Natural killer cell (primary cell): ENCODE measurements at regions of chr2 and their contacts with region 1.

Region 1: DNA sequence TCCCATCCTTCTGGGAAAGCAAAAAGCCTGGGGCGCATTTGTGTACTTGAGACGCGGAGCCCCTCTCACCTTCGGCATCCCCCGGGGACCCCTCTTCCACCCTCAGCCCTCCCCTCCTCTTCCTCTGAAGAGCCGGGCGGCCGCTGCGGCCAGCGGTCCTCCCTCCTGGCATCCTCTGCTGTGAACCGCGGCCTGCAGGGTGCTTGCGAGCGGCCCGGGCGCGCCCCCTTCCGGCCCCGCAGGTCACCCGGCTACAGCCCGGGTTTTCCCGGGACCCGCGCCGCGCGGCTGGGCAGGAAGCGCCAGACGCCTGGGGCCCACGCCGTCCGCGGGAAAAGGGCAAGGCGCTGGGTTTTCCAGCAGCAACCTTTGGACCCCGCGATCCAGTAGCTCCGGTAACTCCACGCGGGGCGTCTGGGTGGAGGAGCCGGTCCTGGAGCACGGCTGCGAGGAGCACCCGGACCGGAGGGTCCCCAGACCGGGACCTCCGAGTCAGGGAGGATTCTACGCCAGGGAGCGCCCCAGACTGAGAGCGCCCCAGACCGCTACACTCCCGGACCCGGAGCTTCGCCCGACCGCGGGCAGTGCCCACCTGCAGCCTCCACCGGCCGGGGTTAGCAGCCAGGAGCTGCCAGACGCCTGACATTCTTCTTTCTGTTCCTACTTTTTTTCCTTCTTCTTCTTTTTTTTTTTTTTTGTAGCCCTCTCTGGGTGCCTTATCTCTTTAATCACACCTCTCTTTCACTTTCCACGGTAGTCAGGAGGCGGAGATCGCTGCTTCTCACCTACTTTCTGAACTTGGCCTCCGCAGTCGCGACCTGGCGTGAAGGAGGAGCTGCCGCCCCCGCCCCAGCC is at the start of gene IL18R1:
- DNase-seq: peak; percentile 75 to 86
- ATAC-seq: peak; percentile 86 to 94 (median 92)
- H3K4me3 ChIP-seq: peak within 1 kb of the TSS; percentile 98
- H3K4me3 Mint-ChIP-seq: peak within 1 kb of the TSS; percentile 99
- H3K27ac ChIP-seq: peak within 1 kb of the TSS; percentile 94
- H3K27ac Mint-ChIP-seq: peak within 1 kb of the TSS; percentile 90 to 97
- H3K4me1 ChIP-seq: peaks cover 31% of the 10 kb centered on the region
- H3K4me1 Mint-ChIP-seq: peaks cover 40 to 48% of the 10 kb centered on the region in 2 donors
- H3K27me3 ChIP-seq: no peaks in the 10 kb centered on the region
- H3K27me3 Mint-ChIP-seq: no peaks in the 10 kb centered on the region
- CTCF ChIP-seq: peak; percentile 91
- total RNA-seq, gene IL18R1: 42.9 to 58.8 (median 46.7) TPM

Region 2: GRCh38 chr2:101688261-101688660 is 667.5 kb before region 1 on chr2:
- intact Hi-C with region 1: no loop called
- DNase-seq: no peak
- ATAC-seq: no peak
- H3K4me3 ChIP-seq: no peak overlapping the region
- H3K4me3 Mint-ChIP-seq: no peak overlapping the region
- H3K27ac ChIP-seq: no peak overlapping the region
- H3K27ac Mint-ChIP-seq: no peak overlapping the region
- H3K4me1 ChIP-seq: no peaks in the 10 kb centered on the region
- H3K4me1 Mint-ChIP-seq: no peaks in the 10 kb centered on the region
- H3K27me3 ChIP-seq: no peaks in the 10 kb centered on the region
- H3K27me3 Mint-ChIP-seq: no peaks in the 10 kb centered on the region
- CTCF ChIP-seq: no peak

Region 3: GRCh38 chr2:101823347-101823791 is 532.4 kb before region 1 on chr2:
- intact Hi-C with region 1: loop called (anchors 5 kb)
- DNase-seq: peak; percentile 44 to 86
- ATAC-seq: peak; percentile 84 to 94 (median 90)
- H3K4me3 ChIP-seq: no peak overlapping the region
- H3K4me3 Mint-ChIP-seq: no peak overlapping the region
- H3K27ac ChIP-seq: no peak overlapping the region
- H3K27ac Mint-ChIP-seq: peak overlapping the region; percentile 33 to 37
- H3K4me1 ChIP-seq: peaks cover 10% of the 10 kb centered on the region
- H3K4me1 Mint-ChIP-seq: peaks cover 48 to 51% of the 10 kb centered on the region in 2 donors
- H3K27me3 ChIP-seq: no peaks in the 10 kb centered on the region
- H3K27me3 Mint-ChIP-seq: no peaks in the 10 kb centered on the region
- CTCF ChIP-seq: peak; percentile 74

Region 4: DNA sequence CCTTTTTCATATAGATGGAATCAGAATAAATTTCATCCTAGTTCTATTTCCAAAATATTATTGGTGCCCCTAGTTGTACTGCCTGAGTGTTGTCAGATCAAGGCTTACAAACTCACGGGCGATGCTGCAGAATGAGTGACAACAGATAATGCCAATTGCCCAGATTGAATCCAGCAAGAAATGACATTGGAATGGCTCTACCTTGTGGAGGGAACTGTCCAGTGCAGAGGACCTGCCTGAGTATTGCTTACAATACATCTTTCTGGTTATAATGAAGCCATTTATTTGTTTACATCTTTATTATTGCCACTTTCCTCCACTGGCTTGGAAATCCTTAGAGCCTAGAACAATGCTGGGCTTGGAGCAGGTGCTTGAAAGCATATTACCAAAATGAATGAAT is 371.8 kb before region 1 on chr2:
- intact Hi-C with region 1: loop called (anchors 5 kb)
- DNase-seq: no peak
- ATAC-seq: no peak
- H3K4me3 ChIP-seq: no peak overlapping the region
- H3K4me3 Mint-ChIP-seq: no peak overlapping the region
- H3K27ac ChIP-seq: no peak overlapping the region
- H3K27ac Mint-ChIP-seq: no peak overlapping the region
- H3K4me1 ChIP-seq: peaks cover 70% of the 10 kb centered on the region
- H3K4me1 Mint-ChIP-seq: peaks cover 56 to 62% of the 10 kb centered on the region in 2 donors
- H3K27me3 ChIP-seq: peaks cover 21% of the 10 kb centered on the region
- H3K27me3 Mint-ChIP-seq: peaks cover 32 to 55% of the 10 kb centered on the region in 2 donors
- CTCF ChIP-seq: no peak

Region 5: GRCh38 chr2:102005989-102006885 is 349.5 kb before region 1 on chr2:
- intact Hi-C with region 1: loop called (anchors 5 kb)
- DNase-seq: peak in 1 of 2 donors; percentile 68
- ATAC-seq: peak in 2 of 3 donors; percentile 55 to 58
- H3K4me3 ChIP-seq: no peak overlapping the region
- H3K4me3 Mint-ChIP-seq: peak overlapping the region; percentile 3
- H3K27ac ChIP-seq: no peak overlapping the region
- H3K27ac Mint-ChIP-seq: no peak overlapping the region
- H3K4me1 ChIP-seq: peaks cover 36% of the 10 kb centered on the region
- H3K4me1 Mint-ChIP-seq: peaks cover 2 to 18% of the 10 kb centered on the region in 2 donors
- H3K27me3 ChIP-seq: peaks cover 16% of the 10 kb centered on the region
- H3K27me3 Mint-ChIP-seq: peaks cover 42 to 50% of the 10 kb centered on the region in 2 donors
- CTCF ChIP-seq: peak; percentile 69

Region 6: DNA sequence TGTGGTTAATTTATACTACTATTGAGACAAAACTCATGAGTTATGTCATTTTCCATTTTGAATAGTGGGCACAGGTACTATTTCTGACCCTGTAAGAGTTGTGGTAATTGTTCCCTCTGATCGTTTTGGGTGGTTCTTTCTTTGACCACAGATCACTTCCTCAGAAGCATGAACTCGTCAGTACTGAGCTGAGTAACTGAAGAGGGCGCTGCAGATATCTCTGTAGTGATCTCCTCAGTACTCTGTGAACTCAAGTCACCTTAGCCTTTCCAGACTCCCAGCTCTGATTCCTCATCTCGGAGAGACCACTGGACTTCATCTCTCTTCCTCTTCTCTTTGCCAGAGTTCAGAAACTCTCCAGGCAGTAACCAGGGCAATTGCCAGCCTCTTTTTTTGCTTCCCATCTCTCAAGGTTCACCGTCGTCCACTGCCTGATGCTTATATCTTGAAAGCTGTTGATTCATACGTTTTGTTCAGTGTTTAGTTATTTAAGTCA is 53.8 kb before region 1 on chr2:
- intact Hi-C with region 1: loop called (anchors 5 kb)
- DNase-seq: peak; percentile 24 to 77
- ATAC-seq: peak; percentile 96 to 100 (median 96)
- H3K4me3 ChIP-seq: no peak overlapping the region
- H3K4me3 Mint-ChIP-seq: peak overlapping the region; percentile 15
- H3K27ac ChIP-seq: no peak overlapping the region
- H3K27ac Mint-ChIP-seq: peak overlapping the region in 1 of 2 donors; percentile 46
- H3K4me1 ChIP-seq: peaks cover 3% of the 10 kb centered on the region
- H3K4me1 Mint-ChIP-seq: peaks cover 13 to 17% of the 10 kb centered on the region in 2 donors
- H3K27me3 ChIP-seq: no peaks in the 10 kb centered on the region
- H3K27me3 Mint-ChIP-seq: peaks cover 15 to 16% of the 10 kb centered on the region in 2 donors
- CTCF ChIP-seq: peak; percentile 56

Region 7: DNA sequence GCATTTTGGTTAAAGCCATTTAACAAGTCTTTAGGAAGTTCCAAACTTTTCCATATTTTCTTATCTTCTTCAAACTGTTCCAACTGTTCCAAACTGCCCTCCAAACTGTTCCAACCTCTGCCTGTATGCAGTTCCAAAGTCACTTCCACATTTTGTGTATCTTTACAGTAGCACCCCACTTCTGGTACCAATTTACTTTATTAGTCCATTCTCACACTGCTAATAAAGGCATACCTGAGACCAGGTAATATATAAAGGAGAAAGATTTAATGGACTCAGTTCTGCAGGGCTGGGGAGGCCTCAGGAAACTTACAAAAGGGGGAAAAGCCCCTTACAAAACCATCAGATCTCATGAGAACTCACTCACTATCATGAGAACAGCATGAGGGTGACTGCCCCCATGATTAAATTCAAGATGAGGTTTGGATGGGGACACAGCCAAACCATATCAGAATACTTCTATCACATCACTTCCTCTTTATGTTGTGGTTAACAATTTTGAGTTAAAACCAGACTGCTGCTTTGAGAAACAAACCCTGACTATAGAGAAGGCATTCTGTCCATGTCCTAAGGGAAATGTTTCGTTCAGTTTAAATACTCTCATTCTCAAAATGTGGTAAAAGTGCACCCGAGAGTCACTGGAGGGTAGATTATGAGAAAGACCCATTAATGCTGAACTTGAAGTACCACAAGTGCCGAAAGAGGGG is 10.8 kb after region 1 on chr2:
- intact Hi-C with region 1: loop called (anchors 1 kb)
- DNase-seq: peak in 1 of 2 donors; percentile 60
- ATAC-seq: peak; percentile 25 to 53 (median 45)
- H3K4me3 ChIP-seq: peak overlapping the region; percentile 26
- H3K4me3 Mint-ChIP-seq: peak overlapping the region; percentile 88
- H3K27ac ChIP-seq: peak overlapping the region; percentile 80
- H3K27ac Mint-ChIP-seq: peak overlapping the region; percentile 90 to 95
- H3K4me1 ChIP-seq: peaks cover 35% of the 10 kb centered on the region
- H3K4me1 Mint-ChIP-seq: peaks cover 87% of the 10 kb centered on the region in 2 donors
- H3K27me3 ChIP-seq: no peaks in the 10 kb centered on the region
- H3K27me3 Mint-ChIP-seq: no peaks in the 10 kb centered on the region
- CTCF ChIP-seq: no peak

Region 8: GRCh38 chr2:102442967-102443828 is 87.4 kb after region 1 on chr2:
- intact Hi-C with region 1: loop called (anchors 1 kb)
- DNase-seq: peak in 1 of 2 donors; percentile 78
- ATAC-seq: peak; percentile 76 to 90 (median 88)
- H3K4me3 ChIP-seq: no peak overlapping the region
- H3K4me3 Mint-ChIP-seq: no peak overlapping the region
- H3K27ac ChIP-seq: peak overlapping the region; percentile 42
- H3K27ac Mint-ChIP-seq: peak overlapping the region; percentile 78 to 84
- H3K4me1 ChIP-seq: peaks cover 15% of the 10 kb centered on the region
- H3K4me1 Mint-ChIP-seq: peaks cover 14 to 17% of the 10 kb centered on the region in 2 donors
- H3K27me3 ChIP-seq: no peaks in the 10 kb centered on the region
- H3K27me3 Mint-ChIP-seq: no peaks in the 10 kb centered on the region
- CTCF ChIP-seq: peak; percentile 85